HCT116 (cell line): ENCODE measurements at regions of chr10 and their contacts with region 1.

Region 1: GRCh38 chr10:127813290-127813689 is 76.3 kb downstream of the FOXI2 start:
- DNase-seq: peak; percentile 16
- ATAC-seq: peak; percentile 64; the same call in 1 of the 2 replicates
- H3K4me3 ChIP-seq: no peak overlapping the region
- H3K27ac ChIP-seq: no peak overlapping the region
- H3K4me1 ChIP-seq: no peaks in the 10 kb centered on the region
- H3K27me3 ChIP-seq: peaks cover 48% of the 10 kb centered on the region
- CTCF ChIP-seq: peak; percentile 35 to 46 (median 44); a peak in 4 of 6 replicates
- POLR2A ChIP-seq: no peak
- RAD21 ChIP-seq: peak; percentile 57

Region 2: GRCh38 chr10:127563718-127564553 is 249.4 kb before region 1 on chr10:
- CTCF ChIA-PET with region 1: no interaction called
- POLR2A ChIA-PET with region 1: no interaction called
- RAD21 ChIA-PET with region 1: no interaction called
- intact Hi-C with region 1: loop called (anchors 1 kb)
- DNase-seq: peak; percentile 24
- ATAC-seq: peak; percentile 87
- H3K4me3 ChIP-seq: no peak overlapping the region
- H3K27ac ChIP-seq: no peak overlapping the region
- H3K4me1 ChIP-seq: no peaks in the 10 kb centered on the region
- H3K27me3 ChIP-seq: peaks cover 52% of the 10 kb centered on the region
- CTCF ChIP-seq: peak; percentile 55 to 99 (median 98); a peak in 5 of 6 replicates
- POLR2A ChIP-seq: no peak
- RAD21 ChIP-seq: peak; percentile 51

Region 3: DNA sequence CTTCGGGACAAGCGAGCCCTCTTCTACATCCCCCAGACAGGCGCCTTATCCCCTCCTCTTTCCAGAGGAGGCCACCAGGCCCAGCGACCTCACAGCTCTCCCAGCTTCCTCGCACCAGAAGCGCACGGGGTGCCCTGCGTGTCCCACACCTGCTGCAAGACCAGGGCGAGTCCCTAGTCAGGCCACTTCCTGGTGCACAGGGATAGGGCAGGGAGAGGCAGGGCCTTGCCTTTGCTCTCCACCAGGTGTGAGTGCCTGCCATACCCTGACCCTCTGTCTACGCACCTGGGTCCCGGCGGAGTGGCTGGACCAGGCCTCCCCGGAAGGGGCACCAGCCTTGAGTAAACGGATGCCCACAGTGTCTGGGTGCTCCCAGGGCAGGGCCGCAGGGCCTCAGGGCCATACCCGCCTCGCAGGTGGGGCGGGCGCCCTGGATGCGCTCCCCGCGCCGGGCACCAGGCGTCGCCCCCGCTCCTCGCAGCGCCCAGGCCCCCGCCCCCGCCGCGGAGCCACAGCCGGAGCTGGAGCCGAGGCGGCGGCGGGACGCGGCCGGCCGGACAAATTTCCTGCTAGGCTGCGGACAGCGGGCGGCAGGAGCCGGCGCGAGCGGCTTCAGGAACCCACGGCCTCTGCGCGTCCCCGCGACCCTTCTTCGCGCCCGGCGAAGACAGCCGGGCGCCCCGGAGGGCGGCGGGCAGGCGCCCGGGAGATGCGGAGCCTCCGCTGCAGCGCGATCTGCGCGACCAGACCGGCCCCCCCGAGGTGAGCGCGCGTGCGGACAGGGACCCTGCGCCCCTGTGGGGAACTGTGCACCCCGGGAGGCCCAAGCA is 93.5 kb after region 1 on chr10 and contains the start of gene PTPRE:
- CTCF ChIA-PET with region 1: no interaction called
- POLR2A ChIA-PET with region 1: no interaction called
- RAD21 ChIA-PET with region 1: no interaction called
- intact Hi-C with region 1: no loop called
- DNase-seq: peak; percentile 40
- ATAC-seq: peak; percentile 92
- H3K4me3 ChIP-seq: peak within 1 kb of the TSS; percentile 44 to 62
- H3K27ac ChIP-seq: peak within 1 kb of the TSS; percentile 56; the same call in 1 of the 2 replicates
- H3K4me1 ChIP-seq: peaks cover 25 to 46% of the 10 kb centered on the region in 2 experiments
- H3K27me3 ChIP-seq: no peaks in the 10 kb centered on the region
- CTCF ChIP-seq: peak; percentile 64 to 78 (median 67)
- POLR2A ChIP-seq: no peak
- RAD21 ChIP-seq: peak; percentile 93
- total RNA-seq, gene PTPRE: 12.3 TPM